Activated CD4-positive, alpha-beta T cell treated with anti-CD3 and anti-CD28 coated beads for 36 hours (primary cell): ENCODE measurements at regions of chr9 and their contacts with region 1.

Region 1: GRCh38 chr9:128275996-128276573 is at the starts of genes GOLGA2 and SWI5:
- DNase-seq: peak; percentile 100
- ATAC-seq: peak; percentile 99
- H3K4me3 Mint-ChIP-seq: peak within 1 kb of the TSS; percentile 97
- H3K27ac Mint-ChIP-seq: peak within 1 kb of the TSS; percentile 95
- H3K4me1 Mint-ChIP-seq: peaks cover 31% of the 10 kb centered on the region
- H3K27me3 Mint-ChIP-seq: no peaks in the 10 kb centered on the region
- total RNA-seq, gene GOLGA2: 28.4 to 29.4 TPM
- total RNA-seq, gene SWI5: 13.1 to 14.1 TPM

Region 2: DNA sequence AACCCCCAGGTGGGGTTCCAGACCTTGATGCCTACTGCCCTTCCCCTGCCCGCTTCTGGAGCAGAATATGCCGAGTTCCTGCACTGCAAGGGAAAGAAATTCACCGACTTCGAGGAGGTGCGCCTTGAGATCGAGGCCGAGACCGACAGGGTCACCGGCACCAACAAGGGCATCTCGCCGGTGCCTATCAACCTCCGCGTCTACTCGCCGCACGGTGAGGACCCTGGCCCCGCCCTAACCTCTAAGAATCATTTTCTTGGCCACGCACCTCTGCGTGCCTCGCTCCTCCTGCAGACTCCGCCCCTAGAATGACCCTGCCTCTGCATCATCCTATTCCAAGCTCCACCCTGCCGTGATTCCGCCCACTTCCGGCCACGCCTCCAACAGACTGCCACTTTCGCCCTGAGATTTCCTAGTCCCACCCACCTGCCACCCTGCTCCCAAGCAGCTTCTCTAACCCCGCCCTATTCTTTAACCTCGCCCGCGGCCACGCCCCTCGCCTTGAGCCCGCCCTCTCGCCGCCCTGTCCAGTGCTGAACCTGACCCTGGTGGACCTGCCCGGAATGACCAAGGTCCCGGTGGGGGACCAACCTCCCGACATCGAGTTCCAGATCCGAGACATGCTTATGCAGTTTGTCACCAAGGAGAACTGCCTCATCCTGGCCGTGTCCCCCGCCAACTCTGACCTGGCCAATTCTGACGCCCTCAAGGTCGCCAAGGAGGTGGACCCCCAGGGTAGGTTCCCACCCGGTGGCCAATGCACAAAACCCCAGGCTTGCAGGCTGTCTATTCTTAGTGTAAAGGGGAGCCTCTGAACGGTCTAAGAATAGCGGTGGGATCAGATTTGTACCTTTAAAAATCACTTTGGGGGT is 57.3 kb before region 1 on chr9:
- CTCF ChIA-PET with region 1: interaction called, 3 read pairs
- POLR2A ChIA-PET with region 1: no interaction called
- intact Hi-C with region 1: loop called in 1 of 2 experiments (anchors 1 kb)
- DNase-seq: peak; percentile 97
- ATAC-seq: peak; percentile 98
- H3K4me3 Mint-ChIP-seq: peak overlapping the region; percentile 71
- H3K27ac Mint-ChIP-seq: peak overlapping the region; percentile 74
- H3K4me1 Mint-ChIP-seq: peaks cover 11% of the 10 kb centered on the region
- H3K27me3 Mint-ChIP-seq: no peaks in the 10 kb centered on the region

Region 3: GRCh38 chr9:128339771-128340690 is 63.9 kb after region 1 on chr9 and contains the start of gene SLC27A4:
- CTCF ChIA-PET with region 1: interaction called, 3 read pairs
- POLR2A ChIA-PET with region 1: no interaction called
- intact Hi-C with region 1: loop called in 1 of 2 experiments (anchors 1 kb)
- DNase-seq: peak; percentile 88
- ATAC-seq: peak; percentile 93
- H3K4me3 Mint-ChIP-seq: peak within 1 kb of the TSS; percentile 88
- H3K27ac Mint-ChIP-seq: peak within 1 kb of the TSS; percentile 83
- H3K4me1 Mint-ChIP-seq: peaks cover 6% of the 10 kb centered on the region
- H3K27me3 Mint-ChIP-seq: no peaks in the 10 kb centered on the region
- total RNA-seq, gene SLC27A4: 8.4 to 10.2 TPM

Region 4: GRCh38 chr9:128688512-128689292 is 412.6 kb after region 1 on chr9 and contains the start of gene SET:
- CTCF ChIA-PET with region 1: no interaction called
- POLR2A ChIA-PET with region 1: no interaction called
- intact Hi-C with region 1: loop called in 1 of 2 experiments (anchors 1 kb)
- DNase-seq: peak; percentile 96
- ATAC-seq: peak; percentile 71
- H3K4me3 Mint-ChIP-seq: peak within 1 kb of the TSS; percentile 99
- H3K27ac Mint-ChIP-seq: peak within 1 kb of the TSS; percentile 94
- H3K4me1 Mint-ChIP-seq: peaks cover 61% of the 10 kb centered on the region
- H3K27me3 Mint-ChIP-seq: no peaks in the 10 kb centered on the region
- total RNA-seq, gene SET: 673 to 682 TPM

Region 5: GRCh38 chr9:129028192-129028957 is 752.3 kb after region 1 on chr9 and contains the start of gene SH3GLB2:
- CTCF ChIA-PET with region 1: no interaction called
- POLR2A ChIA-PET with region 1: no interaction called
- intact Hi-C with region 1: loop called in 1 of 2 experiments (anchors 2 kb)
- DNase-seq: peak; percentile 98
- ATAC-seq: peak; percentile 93
- H3K4me3 Mint-ChIP-seq: peak within 1 kb of the TSS; percentile 81
- H3K27ac Mint-ChIP-seq: peak within 1 kb of the TSS; percentile 52
- H3K4me1 Mint-ChIP-seq: peaks cover 17% of the 10 kb centered on the region
- H3K27me3 Mint-ChIP-seq: no peaks in the 10 kb centered on the region
- total RNA-seq, gene SH3GLB2: 49.1 to 53.7 TPM